ENCODE measurements at regions of chr6 and their contacts with region 1.

Region 1: GRCh38 chr6:24274441-24275083 is 83.3 kb downstream of the DCDC2 start:
- DNase-seq: peak; percentile 8
- H3K4me3 ChIP-seq: no peak overlapping the region
- H3K27ac ChIP-seq: no peak overlapping the region
- H3K4me1 ChIP-seq: peaks cover 0 to 5% of the 10 kb centered on the region in 2 experiments; a peak in 2 of 4 replicates
- H3K27me3 ChIP-seq: no peaks in the 10 kb centered on the region
- CTCF ChIP-seq: peak; percentile 70
- EP300 ChIP-seq: no peak
- RAD21 ChIP-seq: peak; percentile 76

Region 2: DNA sequence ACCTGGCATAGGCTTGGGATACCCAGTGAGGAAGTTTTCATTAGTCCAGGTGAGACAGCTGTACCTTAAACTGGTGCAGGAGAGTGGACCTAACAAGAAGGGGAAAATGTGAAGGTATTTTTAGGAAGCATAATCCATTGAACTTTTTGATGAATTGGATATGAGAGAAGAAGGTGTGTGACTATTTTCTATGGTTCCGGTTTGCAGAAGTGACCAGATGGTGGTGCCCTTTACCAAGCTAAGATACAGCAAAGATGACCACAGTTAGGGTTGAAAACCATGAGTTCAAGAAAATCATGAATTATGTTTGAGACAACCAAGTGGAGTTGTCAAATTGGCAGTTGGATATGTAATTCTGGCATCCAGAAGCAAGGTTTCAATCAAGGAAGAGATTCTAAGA is 210.5 kb before region 1 on chr6:
- CTCF ChIA-PET with region 1: interaction called, 14 read pairs
- POLR2A ChIA-PET with region 1: no interaction called
- DNase-seq: peak; percentile 21
- H3K4me3 ChIP-seq: peak overlapping the region in 1 of 2 experiments; percentile 34; a peak in 1 of 4 replicates
- H3K27ac ChIP-seq: no peak overlapping the region
- H3K4me1 ChIP-seq: no peaks in the 10 kb centered on the region
- H3K27me3 ChIP-seq: no peaks in the 10 kb centered on the region
- CTCF ChIP-seq: no peak
- EP300 ChIP-seq: no peak
- RAD21 ChIP-seq: peak; percentile 90

Region 3: GRCh38 chr6:24307881-24308280 is 33.3 kb after region 1 on chr6:
- CTCF ChIA-PET with region 1: no interaction called
- POLR2A ChIA-PET with region 1: no interaction called
- DNase-seq: no peak
- H3K4me3 ChIP-seq: no peak overlapping the region
- H3K27ac ChIP-seq: no peak overlapping the region
- H3K4me1 ChIP-seq: peaks cover 0 to 4% of the 10 kb centered on the region in 2 experiments; a peak in 1 of 4 replicates
- H3K27me3 ChIP-seq: no peaks in the 10 kb centered on the region
- CTCF ChIP-seq: no peak
- EP300 ChIP-seq: no peak
- RAD21 ChIP-seq: no peak

Region 4: DNA sequence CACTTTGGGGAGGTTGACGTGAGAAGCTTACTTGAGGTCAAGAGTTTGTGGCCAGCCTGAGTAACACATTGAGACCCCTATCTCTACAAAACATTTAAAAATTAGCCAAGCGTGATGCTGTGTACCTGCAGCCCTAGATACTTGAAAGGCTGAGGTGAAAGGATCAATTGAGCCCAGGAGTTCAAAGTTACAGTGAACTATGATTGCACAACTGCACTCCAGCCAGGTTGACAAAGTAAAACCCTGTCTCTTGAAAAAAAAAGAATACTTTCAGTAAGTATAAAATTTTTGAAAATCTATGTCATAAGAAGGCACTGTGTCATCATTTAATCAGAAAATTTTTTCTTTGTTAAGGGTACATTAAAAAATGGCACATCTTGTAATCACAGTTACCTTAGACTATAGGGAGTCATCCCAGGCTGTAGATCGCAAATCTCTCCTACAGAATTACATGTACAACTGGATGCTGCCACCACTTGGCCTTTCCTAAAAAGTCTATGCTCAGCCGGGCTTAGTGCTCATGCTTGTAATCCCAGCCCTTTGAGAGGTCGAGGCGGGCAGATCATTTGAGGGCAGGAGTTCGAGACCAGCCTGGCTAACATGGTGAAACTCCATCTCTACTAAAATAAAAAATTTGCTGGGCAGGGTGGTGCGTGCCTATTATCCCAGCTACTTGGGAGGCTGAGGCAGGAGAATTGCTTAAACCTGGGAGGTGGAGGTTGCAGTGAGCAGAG is 111.1 kb after region 1 on chr6:
- CTCF ChIA-PET with region 1: interaction called, 15 read pairs
- POLR2A ChIA-PET with region 1: no interaction called
- DNase-seq: no peak
- H3K4me3 ChIP-seq: no peak overlapping the region
- H3K27ac ChIP-seq: no peak overlapping the region
- H3K4me1 ChIP-seq: no peaks in the 10 kb centered on the region; a peak in 1 of 4 replicates
- H3K27me3 ChIP-seq: no peaks in the 10 kb centered on the region
- CTCF ChIP-seq: no peak
- EP300 ChIP-seq: no peak
- RAD21 ChIP-seq: no peak

Region 5: GRCh38 chr6:24621626-24622289 is 347.2 kb after region 1 on chr6:
- CTCF ChIA-PET with region 1: no interaction called
- POLR2A ChIA-PET with region 1: no interaction called
- DNase-seq: no peak
- H3K4me3 ChIP-seq: no peak overlapping the region
- H3K27ac ChIP-seq: no peak overlapping the region
- H3K4me1 ChIP-seq: no peaks in the 10 kb centered on the region
- H3K27me3 ChIP-seq: no peaks in the 10 kb centered on the region
- CTCF ChIP-seq: no peak
- EP300 ChIP-seq: no peak
- RAD21 ChIP-seq: no peak

Measured in SK-N-SH (cell line).